ENCODE measurements at regions of chr1 and their contacts with region 1.

Region 1: DNA sequence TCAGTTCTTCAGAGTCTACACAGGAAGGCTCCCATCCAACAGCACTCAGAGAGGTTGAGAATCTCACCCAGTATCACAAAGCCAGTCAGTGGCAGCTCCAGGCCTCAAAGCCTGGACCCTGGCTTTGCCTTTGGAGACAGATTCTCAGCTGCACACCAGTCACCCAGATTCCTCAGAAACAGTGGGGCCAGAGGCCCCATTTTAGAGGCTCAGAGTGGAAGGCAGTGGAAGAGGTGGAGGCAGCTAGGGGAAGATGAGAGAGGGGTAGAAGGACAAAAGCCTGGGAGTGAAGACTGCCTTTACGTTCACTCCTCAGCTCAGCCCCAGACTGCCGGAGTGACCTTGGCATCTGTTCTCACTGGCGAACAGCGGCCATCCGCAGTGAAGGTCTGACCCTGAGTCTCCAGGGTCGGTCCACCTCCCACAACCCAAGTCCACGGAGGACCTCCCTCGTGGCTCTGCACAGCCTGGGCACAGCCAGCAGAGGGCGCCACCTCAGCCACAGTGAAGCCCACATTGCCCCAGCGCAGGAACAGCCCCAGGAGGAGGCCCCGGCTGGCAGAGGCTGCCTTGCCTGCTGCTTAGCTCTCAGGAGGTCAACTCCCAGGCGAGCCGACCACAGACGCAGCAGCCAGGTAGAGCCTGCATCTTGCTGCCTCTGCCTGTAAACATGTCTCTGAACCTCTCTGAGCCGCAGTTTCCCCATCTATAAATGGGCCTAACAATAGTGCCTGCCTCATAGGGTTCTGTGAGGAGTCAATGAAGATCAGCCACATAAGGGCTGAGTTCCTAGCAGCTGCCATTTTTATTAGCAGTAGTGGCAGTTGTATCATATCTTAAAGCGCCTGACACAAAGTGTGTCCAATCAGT is 5.9 kb upstream of the FNDC5 start:
- DNase-seq: peak; percentile 79
- H3K4me3 Mint-ChIP-seq: no peak overlapping the region
- H3K27ac Mint-ChIP-seq: no peak overlapping the region
- H3K4me1 Mint-ChIP-seq: peaks cover 2% of the 10 kb centered on the region
- H3K27me3 Mint-ChIP-seq: peaks cover 37% of the 10 kb centered on the region

Region 2: DNA sequence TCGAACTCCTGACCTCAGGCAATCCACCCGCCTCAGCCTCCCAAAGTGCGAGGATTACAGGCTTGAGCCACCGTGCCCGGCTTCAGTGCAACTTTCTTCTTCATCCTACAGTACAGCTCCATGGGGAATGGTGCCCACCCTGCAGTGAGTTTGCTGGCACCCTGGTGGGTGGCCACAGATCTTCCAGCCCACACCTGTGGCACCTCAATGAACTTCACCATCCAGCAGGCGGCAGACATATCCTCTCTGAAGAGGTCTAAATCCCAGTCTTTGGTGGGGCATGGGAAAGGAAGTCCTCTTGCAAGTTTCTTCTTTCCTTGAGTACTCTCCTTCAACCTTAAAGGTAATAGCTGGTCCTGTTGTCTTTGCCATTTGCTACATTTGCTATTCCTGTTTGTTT is 355.4 kb before region 1 on chr1:
- CTCF ChIA-PET with region 1: interaction called, 15 read pairs
- POLR2A ChIA-PET with region 1: no interaction called
- intact Hi-C with region 1: loop called (anchors 10 kb)
- DNase-seq: no peak
- H3K4me3 Mint-ChIP-seq: peak overlapping the region; percentile 64
- H3K27ac Mint-ChIP-seq: no peak overlapping the region
- H3K4me1 Mint-ChIP-seq: peaks cover 6% of the 10 kb centered on the region
- H3K27me3 Mint-ChIP-seq: peaks cover 7% of the 10 kb centered on the region

Region 3: GRCh38 chr1:32580348-32581017 is 296.1 kb before region 1 on chr1:
- CTCF ChIA-PET with region 1: no interaction called
- POLR2A ChIA-PET with region 1: no interaction called
- intact Hi-C with region 1: no loop called
- DNase-seq: no peak
- H3K4me3 Mint-ChIP-seq: no peak overlapping the region
- H3K27ac Mint-ChIP-seq: no peak overlapping the region
- H3K4me1 Mint-ChIP-seq: no peaks in the 10 kb centered on the region
- H3K27me3 Mint-ChIP-seq: no peaks in the 10 kb centered on the region

Region 4: DNA sequence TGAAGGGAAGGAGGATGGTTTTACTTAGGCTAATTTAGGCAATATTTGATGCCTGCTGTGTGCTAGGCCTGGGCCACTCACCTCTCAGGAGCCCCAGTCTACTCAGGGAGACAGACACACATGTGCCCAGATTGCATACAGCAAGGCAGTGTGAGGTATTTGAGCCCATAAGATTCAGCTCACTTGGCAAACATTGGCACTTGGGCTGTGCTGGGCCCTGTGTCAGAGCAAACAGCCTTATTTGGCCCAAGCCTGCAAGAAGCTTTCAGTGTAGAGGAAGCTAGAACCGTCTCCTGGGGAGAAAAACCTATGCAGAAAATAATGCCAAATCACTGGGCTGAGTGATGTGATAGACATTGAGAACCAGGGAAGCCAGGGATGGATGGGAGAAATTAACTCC is 170.1 kb before region 1 on chr1:
- CTCF ChIA-PET with region 1: interaction called, 80 read pairs
- POLR2A ChIA-PET with region 1: no interaction called
- intact Hi-C with region 1: no loop called
- DNase-seq: no peak
- H3K4me3 Mint-ChIP-seq: no peak overlapping the region
- H3K27ac Mint-ChIP-seq: no peak overlapping the region
- H3K4me1 Mint-ChIP-seq: peaks cover 9% of the 10 kb centered on the region
- H3K27me3 Mint-ChIP-seq: peaks cover 29% of the 10 kb centered on the region

Region 5: GRCh38 chr1:32736812-32737791 is 139.5 kb before region 1 on chr1:
- CTCF ChIA-PET with region 1: no interaction called
- POLR2A ChIA-PET with region 1: no interaction called
- intact Hi-C with region 1: no loop called
- DNase-seq: no peak
- H3K4me3 Mint-ChIP-seq: no peak overlapping the region
- H3K27ac Mint-ChIP-seq: no peak overlapping the region
- H3K4me1 Mint-ChIP-seq: no peaks in the 10 kb centered on the region
- H3K27me3 Mint-ChIP-seq: peaks cover 9% of the 10 kb centered on the region

Region 6: DNA sequence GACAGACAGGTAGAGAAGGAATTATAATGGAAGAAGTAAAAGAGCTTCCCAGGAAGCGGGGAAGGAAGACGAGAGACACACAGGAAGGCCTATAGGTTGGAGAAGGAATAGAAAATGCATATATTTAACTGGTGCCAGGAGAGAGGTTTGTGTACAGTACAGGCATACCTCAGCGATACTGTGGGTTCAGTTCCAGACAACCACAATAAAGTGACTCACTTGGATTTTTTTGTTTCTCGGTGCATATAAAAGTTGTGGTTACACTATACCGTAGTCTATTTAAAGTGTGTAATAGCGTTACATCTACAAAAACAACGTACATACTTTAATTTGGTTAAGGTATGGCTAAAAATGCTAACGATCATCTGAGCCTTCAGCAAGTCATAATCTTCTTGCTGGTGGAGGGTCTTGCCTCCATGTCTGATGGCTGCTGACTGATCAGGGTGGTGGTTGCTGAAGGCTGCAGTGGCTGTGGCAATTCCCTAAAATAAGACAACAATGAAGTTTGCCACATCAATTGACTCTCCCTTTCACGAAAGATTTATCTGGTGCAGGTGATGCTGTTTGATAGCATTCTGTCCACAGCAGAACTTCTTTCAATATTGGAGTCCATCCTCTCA is 75.4 kb before region 1 on chr1:
- CTCF ChIA-PET with region 1: no interaction called
- POLR2A ChIA-PET with region 1: no interaction called
- intact Hi-C with region 1: no loop called
- DNase-seq: peak; percentile 58
- H3K4me3 Mint-ChIP-seq: peak overlapping the region; percentile 13
- H3K27ac Mint-ChIP-seq: peak overlapping the region; percentile 74
- H3K4me1 Mint-ChIP-seq: peaks cover 56% of the 10 kb centered on the region
- H3K27me3 Mint-ChIP-seq: no peaks in the 10 kb centered on the region

Region 7: GRCh38 chr1:32892368-32893197 is 16.0 kb after region 1 on chr1:
- CTCF ChIA-PET with region 1: interaction called, 21 read pairs
- POLR2A ChIA-PET with region 1: no interaction called
- intact Hi-C with region 1: no loop called
- DNase-seq: peak; percentile 59
- H3K4me3 Mint-ChIP-seq: no peak overlapping the region
- H3K27ac Mint-ChIP-seq: no peak overlapping the region
- H3K4me1 Mint-ChIP-seq: peaks cover 9% of the 10 kb centered on the region
- H3K27me3 Mint-ChIP-seq: peaks cover 56% of the 10 kb centered on the region

Region 8: DNA sequence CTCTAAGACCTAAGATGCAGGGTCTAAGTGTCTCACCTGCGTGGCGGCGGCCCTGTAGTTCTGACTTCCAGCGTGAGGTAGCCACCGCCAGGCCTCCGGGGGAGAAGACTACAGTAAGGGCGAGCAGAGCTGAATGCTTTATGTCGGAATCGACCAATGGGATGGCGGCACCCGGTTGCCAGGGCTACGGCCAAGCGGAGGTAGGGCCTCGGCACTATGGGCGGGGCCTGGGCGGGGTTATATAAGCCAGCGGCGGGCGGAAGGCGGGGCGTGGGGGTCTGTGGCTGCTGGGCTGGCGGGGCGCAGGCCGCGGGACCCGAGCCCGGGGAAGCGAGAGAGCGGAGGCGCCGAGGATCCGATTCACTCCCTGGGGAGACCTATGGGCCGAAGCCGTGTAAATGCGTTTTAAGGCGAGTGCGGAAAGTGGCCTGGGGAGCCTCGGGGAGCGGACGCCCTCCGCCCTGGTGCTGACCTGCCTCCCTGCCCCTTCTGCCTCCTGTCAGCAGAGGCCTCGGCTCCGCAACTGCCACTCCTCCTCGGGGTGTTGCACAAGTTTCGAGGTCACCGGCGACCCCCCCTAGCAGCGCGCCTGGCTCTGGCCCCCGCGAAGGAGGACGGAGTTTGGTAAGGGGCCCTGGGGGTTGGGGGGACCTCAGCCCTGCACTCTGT is 204.4 kb after region 1 on chr1 and contains the start of gene AZIN2:
- CTCF ChIA-PET with region 1: interaction called, 39 read pairs
- POLR2A ChIA-PET with region 1: interaction called, 4 read pairs
- intact Hi-C with region 1: loop called (anchors 2 kb)
- DNase-seq: peak; percentile 98
- H3K4me3 Mint-ChIP-seq: peak within 1 kb of the TSS; percentile 62
- H3K27ac Mint-ChIP-seq: no peak within 1 kb of the TSS
- H3K4me1 Mint-ChIP-seq: peaks cover 6% of the 10 kb centered on the region
- H3K27me3 Mint-ChIP-seq: no peaks in the 10 kb centered on the region
- total RNA-seq, gene AZIN2: 2.5 to 2.9 TPM

Region 9: DNA sequence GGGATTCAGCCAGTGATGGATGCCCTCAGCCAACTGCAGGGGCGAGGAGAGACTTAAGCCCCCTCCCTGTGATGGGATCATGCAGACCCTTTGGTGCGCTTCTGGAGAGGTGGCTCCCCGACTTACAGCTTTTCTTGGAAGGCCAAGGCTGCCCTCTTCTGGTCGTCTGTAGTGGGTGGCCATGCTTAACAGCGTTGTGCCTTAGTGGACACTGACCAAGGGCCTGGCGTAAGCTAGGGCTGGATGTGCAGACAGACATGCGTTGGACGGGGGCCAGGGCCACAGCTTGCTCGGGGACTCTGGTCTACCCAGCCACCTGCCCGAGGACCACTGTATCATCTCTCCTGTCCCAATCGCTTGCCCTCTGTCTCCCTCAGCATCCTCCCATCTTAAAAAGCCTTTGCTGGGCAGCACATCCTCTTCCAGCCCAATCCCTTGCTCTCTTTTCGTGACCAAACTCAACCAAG is 209.8 kb after region 1 on chr1:
- CTCF ChIA-PET with region 1: interaction called, 39 read pairs
- POLR2A ChIA-PET with region 1: interaction called, 4 read pairs
- intact Hi-C with region 1: loop called (anchors 2 kb)
- DNase-seq: peak; percentile 64
- H3K4me3 Mint-ChIP-seq: no peak overlapping the region
- H3K27ac Mint-ChIP-seq: no peak overlapping the region
- H3K4me1 Mint-ChIP-seq: peaks cover 15% of the 10 kb centered on the region
- H3K27me3 Mint-ChIP-seq: no peaks in the 10 kb centered on the region

Measured in activated CD4-positive, alpha-beta memory T cell treated with anti-CD3 and anti-CD28 coated beads for 36 hours (primary cell).